CD8-positive, alpha-beta T cell (primary cell): ENCODE measurements at regions of chr1 and their contacts with region 1.

Region 1: GRCh38 chr1:160862203-160863060 is at the start of gene CD244:
- DNase-seq: peak; percentile 25 to 89 (median 50)
- ATAC-seq: peak; percentile 88
- H3K4me3 ChIP-seq: peak within 1 kb of the TSS; percentile 14 to 68
- H3K4me3 Mint-ChIP-seq: peak within 1 kb of the TSS; percentile 79
- H3K27ac ChIP-seq: peak within 1 kb of the TSS; percentile 11 to 73
- H3K27ac Mint-ChIP-seq: peak within 1 kb of the TSS; percentile 88
- H3K4me1 ChIP-seq: peaks cover 20% of the 10 kb centered on the region
- H3K4me1 Mint-ChIP-seq: peaks cover 40% of the 10 kb centered on the region
- H3K27me3 ChIP-seq: no peaks in the 10 kb centered on the region
- H3K27me3 Mint-ChIP-seq: no peaks in the 10 kb centered on the region
- CTCF ChIP-seq: no peak
- total RNA-seq, gene CD244: 2.1 to 2.6 TPM

Region 2: DNA sequence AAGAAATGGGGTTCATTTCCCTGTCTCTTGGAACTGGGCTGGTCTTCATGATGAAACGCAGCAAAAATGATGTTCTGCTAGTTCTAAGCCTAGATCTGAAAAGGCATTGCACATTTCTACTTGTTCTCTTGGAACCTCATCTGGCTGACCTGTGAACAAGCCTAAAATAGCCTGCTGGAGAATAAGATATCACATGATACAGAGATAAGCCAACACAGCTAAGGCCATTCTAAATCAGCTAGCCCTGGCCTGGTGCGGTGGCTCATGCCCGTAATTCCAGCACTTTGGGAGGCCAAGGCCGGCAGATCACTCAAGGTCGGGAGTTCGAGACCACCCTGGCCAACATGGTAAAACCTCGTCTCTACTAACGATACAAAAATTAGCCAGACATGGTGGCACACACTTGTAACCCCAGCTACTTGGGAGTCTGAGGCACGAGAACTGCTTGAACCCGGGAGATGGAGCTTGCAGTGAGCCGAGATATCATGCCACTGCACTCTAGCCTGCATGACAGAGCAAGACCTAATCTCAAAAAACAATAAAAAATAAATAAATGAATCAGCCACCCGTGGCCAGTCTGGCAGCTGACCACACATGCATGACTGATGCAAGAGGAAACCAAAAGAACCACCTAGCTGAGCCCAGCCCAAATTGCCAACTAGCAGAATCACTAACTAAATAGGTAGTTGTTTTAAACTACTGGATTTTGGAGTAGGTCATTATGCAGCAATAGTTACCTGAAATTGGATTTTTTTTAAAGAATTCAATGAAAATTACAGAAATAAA is 17.8 kb before region 1 on chr1:
- CTCF ChIA-PET with region 1: interaction called, 5 read pairs
- POLR2A ChIA-PET with region 1: interaction called, 3 read pairs
- intact Hi-C with region 1: loop called in 1 of 2 experiments (anchors 2 kb)
- DNase-seq: peak in 2 of 9 experiments; percentile 27 to 33
- ATAC-seq: no peak
- H3K4me3 ChIP-seq: no peak overlapping the region
- H3K4me3 Mint-ChIP-seq: no peak overlapping the region
- H3K27ac ChIP-seq: no peak overlapping the region
- H3K27ac Mint-ChIP-seq: no peak overlapping the region
- H3K4me1 ChIP-seq: peaks cover 21% of the 10 kb centered on the region
- H3K4me1 Mint-ChIP-seq: peaks cover 49% of the 10 kb centered on the region
- H3K27me3 ChIP-seq: no peaks in the 10 kb centered on the region
- H3K27me3 Mint-ChIP-seq: no peaks in the 10 kb centered on the region
- CTCF ChIP-seq: no peak

Region 3: DNA sequence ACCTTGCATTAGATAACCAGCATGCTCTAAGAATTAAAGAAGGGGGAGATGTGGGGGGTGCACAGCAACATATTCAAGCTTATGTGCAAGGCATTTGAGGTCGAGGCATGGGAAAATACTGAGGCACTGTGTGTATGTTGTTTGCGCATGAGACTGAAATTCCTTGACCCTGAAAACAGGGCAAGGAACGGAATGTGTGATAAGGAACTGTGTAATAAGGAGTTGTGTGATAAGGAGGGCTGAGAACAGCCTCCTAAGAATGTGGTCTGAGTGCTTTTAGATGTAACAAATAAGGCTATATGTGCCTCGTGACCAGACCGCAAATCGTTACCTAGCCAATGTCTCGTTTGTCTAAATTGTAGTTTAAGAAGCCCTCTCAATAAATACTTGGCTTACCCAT is 49.0 kb after region 1 on chr1:
- CTCF ChIA-PET with region 1: no interaction called
- POLR2A ChIA-PET with region 1: no interaction called
- intact Hi-C with region 1: no loop called
- DNase-seq: no peak
- ATAC-seq: no peak
- H3K4me3 ChIP-seq: no peak overlapping the region
- H3K4me3 Mint-ChIP-seq: no peak overlapping the region
- H3K27ac ChIP-seq: no peak overlapping the region
- H3K27ac Mint-ChIP-seq: no peak overlapping the region
- H3K4me1 ChIP-seq: no peaks in the 10 kb centered on the region
- H3K4me1 Mint-ChIP-seq: no peaks in the 10 kb centered on the region
- H3K27me3 ChIP-seq: no peaks in the 10 kb centered on the region
- H3K27me3 Mint-ChIP-seq: no peaks in the 10 kb centered on the region
- CTCF ChIP-seq: no peak

Region 4: GRCh38 chr1:160945079-160945478 is 82.6 kb after region 1 on chr1:
- CTCF ChIA-PET with region 1: no interaction called
- POLR2A ChIA-PET with region 1: no interaction called
- intact Hi-C with region 1: no loop called
- DNase-seq: no peak
- ATAC-seq: no peak
- H3K4me3 ChIP-seq: no peak overlapping the region
- H3K4me3 Mint-ChIP-seq: no peak overlapping the region
- H3K27ac ChIP-seq: no peak overlapping the region
- H3K27ac Mint-ChIP-seq: no peak overlapping the region
- H3K4me1 ChIP-seq: no peaks in the 10 kb centered on the region
- H3K4me1 Mint-ChIP-seq: no peaks in the 10 kb centered on the region
- H3K27me3 ChIP-seq: no peaks in the 10 kb centered on the region
- H3K27me3 Mint-ChIP-seq: no peaks in the 10 kb centered on the region
- CTCF ChIP-seq: no peak